ENCODE measurements at regions of chr12 and their contacts with region 1.

Region 1: DNA sequence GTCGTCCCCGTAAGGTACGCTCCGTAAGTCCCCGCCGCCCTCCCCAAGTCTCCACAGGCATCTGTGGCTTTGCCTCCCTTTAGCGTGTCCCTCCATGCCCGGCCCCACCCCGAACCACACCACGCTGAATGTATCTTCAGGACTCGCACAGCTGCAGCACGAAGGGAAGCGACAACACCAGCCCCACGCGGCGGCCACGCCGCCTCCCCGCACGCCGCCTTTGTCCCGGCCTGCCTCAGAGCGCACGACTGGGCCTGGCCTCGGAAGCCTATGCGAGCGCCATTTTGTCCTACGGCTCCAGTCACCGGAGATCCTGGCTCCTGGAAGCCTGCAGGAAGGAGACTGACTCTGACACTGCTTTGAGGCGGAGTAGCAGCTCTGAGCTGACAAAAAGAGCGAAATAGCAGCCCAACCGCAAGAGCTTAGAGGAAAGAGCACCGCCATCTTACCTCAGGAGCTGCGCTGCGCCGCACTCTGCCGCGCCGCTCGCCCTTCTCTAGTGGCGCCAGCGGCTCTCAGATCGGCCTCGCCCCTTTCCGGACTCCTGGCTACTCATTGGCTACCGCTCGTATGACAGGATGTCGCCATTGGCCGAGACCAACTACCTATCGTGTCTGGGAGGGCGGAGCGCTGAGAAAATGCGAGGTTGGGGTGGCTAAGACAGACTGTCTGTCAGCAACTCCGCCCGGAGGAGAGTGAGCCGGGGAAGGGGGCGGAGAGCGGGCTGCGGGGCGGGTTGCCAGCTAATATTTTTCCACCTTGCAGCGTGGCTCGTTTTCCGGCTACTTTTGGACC is at the start of gene KANSL2:
- DNase-seq: peak; percentile 87 to 99 (median 97)
- ATAC-seq: peak; percentile 94
- H3K4me3 Mint-ChIP-seq: peak within 1 kb of the TSS; percentile 82 to 98 (median 96)
- H3K27ac Mint-ChIP-seq: peak within 1 kb of the TSS; percentile 95 to 100 (median 99)
- H3K4me1 Mint-ChIP-seq: peaks cover 24 to 57% (median 46%) of the 10 kb centered on the region in 4 donors
- H3K27me3 Mint-ChIP-seq: no peaks in the 10 kb centered on the region
- polyA plus RNA-seq, gene KANSL2: 21.0 to 30.2 (median 27.4) TPM

Region 2: DNA sequence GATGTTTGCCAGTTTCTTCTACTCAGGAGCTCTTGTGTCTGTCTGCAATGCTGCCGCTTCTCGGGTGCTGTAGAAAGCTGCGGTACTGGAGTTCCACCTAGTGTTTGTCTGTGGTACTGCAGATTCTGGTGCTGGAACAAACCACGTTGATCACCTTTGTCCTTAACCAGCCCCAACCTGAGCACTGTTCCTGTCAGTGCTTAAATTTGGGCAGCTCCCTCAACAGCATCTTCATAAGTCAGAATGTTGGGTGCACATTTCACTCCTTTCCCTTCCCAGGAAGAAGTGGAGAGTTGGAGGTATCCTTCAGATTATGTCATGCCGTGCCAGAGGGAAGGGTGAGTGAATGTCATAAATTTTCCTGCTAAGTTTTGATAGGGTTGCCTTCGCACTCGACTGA is 63.4 kb before region 1 on chr12:
- POLR2A ChIA-PET with region 1: no interaction called
- DNase-seq: peak; percentile 45 to 82 (median 74)
- ATAC-seq: peak; percentile 93 to 98
- H3K4me3 Mint-ChIP-seq: no peak overlapping the region
- H3K27ac Mint-ChIP-seq: no peak overlapping the region
- H3K4me1 Mint-ChIP-seq: no peaks in the 10 kb centered on the region
- H3K27me3 Mint-ChIP-seq: peaks cover 16 to 41% (median 27%) of the 10 kb centered on the region in 5 donors

Region 3: DNA sequence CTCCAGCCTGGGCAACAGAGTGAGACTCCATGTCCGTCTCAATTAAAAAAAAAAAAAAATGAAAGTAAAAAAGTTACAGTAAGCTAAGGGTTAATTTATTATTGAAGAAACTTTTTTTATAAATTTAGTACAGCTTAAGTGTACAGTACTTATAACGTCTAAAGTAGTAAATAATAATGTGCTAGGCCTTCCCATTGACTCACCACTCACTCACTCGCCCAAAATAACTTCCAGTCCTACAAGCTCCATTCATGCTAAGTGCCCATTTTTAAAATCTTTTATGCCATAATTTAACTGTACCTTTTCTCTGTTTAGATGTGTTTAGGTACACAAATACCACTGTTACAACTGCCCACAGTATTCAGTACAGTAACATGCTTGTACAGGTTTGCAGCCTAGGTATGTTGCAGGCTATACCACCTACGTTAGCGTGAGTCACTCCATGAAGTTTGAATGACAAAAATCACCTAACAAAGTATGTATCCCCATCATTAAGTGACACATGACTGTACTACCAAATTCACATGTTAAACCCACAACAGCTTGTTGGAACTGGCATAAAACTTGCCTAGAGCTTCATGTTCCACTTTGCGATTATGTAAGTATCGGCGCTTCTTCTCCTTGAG is 10.6 kb before region 1 on chr12:
- POLR2A ChIA-PET with region 1: interaction called, 13 read pairs
- DNase-seq: no peak
- ATAC-seq: no peak
- H3K4me3 Mint-ChIP-seq: no peak overlapping the region
- H3K27ac Mint-ChIP-seq: peak overlapping the region in 1 of 10 donors; percentile 31
- H3K4me1 Mint-ChIP-seq: peaks cover 4 to 23% (median 10%) of the 10 kb centered on the region in 4 donors
- H3K27me3 Mint-ChIP-seq: no peaks in the 10 kb centered on the region

Region 4: GRCh38 chr12:48716493-48717251 is 34.7 kb after region 1 on chr12 and contains the start of gene CCNT1:
- POLR2A ChIA-PET with region 1: interaction called, 23 read pairs
- DNase-seq: peak; percentile 92 to 100 (median 99)
- ATAC-seq: peak; percentile 85 to 92
- H3K4me3 Mint-ChIP-seq: peak within 1 kb of the TSS; percentile 87 to 98 (median 97)
- H3K27ac Mint-ChIP-seq: peak within 1 kb of the TSS; percentile 96 to 100 (median 99)
- H3K4me1 Mint-ChIP-seq: peaks cover 19 to 51% (median 41%) of the 10 kb centered on the region in 4 donors
- H3K27me3 Mint-ChIP-seq: no peaks in the 10 kb centered on the region
- polyA plus RNA-seq, gene CCNT1: 12.9 to 22.6 (median 12.9) TPM

Region 5: DNA sequence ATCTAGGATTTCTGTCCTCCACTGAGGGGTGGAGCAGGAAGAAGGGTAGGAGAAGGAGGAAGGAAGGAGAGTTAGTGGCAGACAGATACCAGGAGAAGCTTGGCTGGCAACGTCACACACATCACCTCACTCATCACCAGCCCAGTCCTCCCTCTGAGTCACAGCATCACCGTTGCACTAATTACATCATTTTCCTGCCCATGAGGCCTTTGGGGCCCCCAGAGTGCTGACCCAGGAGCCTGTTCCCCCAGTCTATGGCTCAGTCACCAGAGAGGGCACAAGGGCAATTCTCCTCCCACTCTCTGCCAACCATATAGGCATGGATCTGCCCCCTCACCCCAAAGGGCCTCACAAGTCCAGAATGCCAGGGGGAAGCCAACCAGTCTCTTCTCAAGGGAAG is 179.2 kb after region 1 on chr12:
- POLR2A ChIA-PET with region 1: no interaction called
- DNase-seq: no peak
- ATAC-seq: no peak
- H3K4me3 Mint-ChIP-seq: no peak overlapping the region
- H3K27ac Mint-ChIP-seq: peak overlapping the region in 1 of 10 donors; percentile 44
- H3K4me1 Mint-ChIP-seq: peaks cover 13 to 23% (median 22%) of the 10 kb centered on the region in 4 donors
- H3K27me3 Mint-ChIP-seq: peaks cover 17 to 41% (median 28%) of the 10 kb centered on the region in 5 donors